Transverse colon (tissue), 4 donors: ENCODE measurements at regions of chr7 and their contacts with region 1.

Region 1: GRCh38 chr7:17640730-17641377 is 299.4 kb downstream of the SNX13 start:
- DNase-seq: no peak
- H3K4me3 ChIP-seq: no peak overlapping the region
- H3K27ac ChIP-seq: no peak overlapping the region
- H3K4me1 ChIP-seq: no peaks in the 10 kb centered on the region
- H3K27me3 ChIP-seq: no peaks in the 10 kb centered on the region
- CTCF ChIP-seq: peak; percentile 55 to 68 (median 65)
- EP300 ChIP-seq: no peak
- POLR2A ChIP-seq: no peak

Region 2: DNA sequence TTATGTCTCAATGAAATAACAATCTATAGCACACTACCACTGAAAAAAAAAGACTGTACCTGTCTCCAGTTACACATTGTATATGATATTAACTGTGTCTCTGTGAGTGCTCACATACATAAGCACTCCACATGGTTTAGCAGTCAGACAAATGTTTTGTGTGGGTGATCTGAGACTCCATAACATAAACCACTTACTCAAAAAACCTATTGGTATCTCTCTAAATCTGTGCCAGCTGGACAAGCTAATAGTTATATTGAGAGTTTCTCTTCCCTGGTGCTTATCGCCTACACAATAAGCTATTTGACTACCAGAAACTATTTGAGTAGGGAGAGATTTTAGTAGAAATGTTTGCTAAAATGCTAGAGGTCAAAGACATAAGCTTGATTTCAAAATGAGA is 569.0 kb before region 1 on chr7:
- in situ Hi-C with region 1: no loop called
- intact Hi-C with region 1: no loop called
- DNase-seq: no peak
- H3K4me3 ChIP-seq: no peak overlapping the region
- H3K27ac ChIP-seq: no peak overlapping the region
- H3K4me1 ChIP-seq: no peaks in the 10 kb centered on the region
- H3K27me3 ChIP-seq: no peaks in the 10 kb centered on the region
- CTCF ChIP-seq: no peak
- EP300 ChIP-seq: no peak
- POLR2A ChIP-seq: no peak

Region 3: GRCh38 chr7:17318146-17318545 is 322.7 kb before region 1 on chr7:
- in situ Hi-C with region 1: loop called in 2 of 4 experiments (anchors 10 to 25 kb)
- intact Hi-C with region 1: no loop called
- DNase-seq: no peak
- H3K4me3 ChIP-seq: no peak overlapping the region
- H3K27ac ChIP-seq: no peak overlapping the region
- H3K4me1 ChIP-seq: peaks cover 0 to 29% (median 16%) of the 10 kb centered on the region in 4 donors
- H3K27me3 ChIP-seq: no peaks in the 10 kb centered on the region
- CTCF ChIP-seq: no peak
- EP300 ChIP-seq: no peak
- POLR2A ChIP-seq: no peak

Region 4: GRCh38 chr7:17411922-17412321 is 228.9 kb before region 1 on chr7:
- in situ Hi-C with region 1: no loop called
- intact Hi-C with region 1: no loop called
- DNase-seq: no peak
- H3K4me3 ChIP-seq: no peak overlapping the region
- H3K27ac ChIP-seq: no peak overlapping the region
- H3K4me1 ChIP-seq: peaks cover 0 to 4% (median 2%) of the 10 kb centered on the region in 4 donors
- H3K27me3 ChIP-seq: no peaks in the 10 kb centered on the region
- CTCF ChIP-seq: no peak
- EP300 ChIP-seq: no peak
- POLR2A ChIP-seq: no peak

Region 5: DNA sequence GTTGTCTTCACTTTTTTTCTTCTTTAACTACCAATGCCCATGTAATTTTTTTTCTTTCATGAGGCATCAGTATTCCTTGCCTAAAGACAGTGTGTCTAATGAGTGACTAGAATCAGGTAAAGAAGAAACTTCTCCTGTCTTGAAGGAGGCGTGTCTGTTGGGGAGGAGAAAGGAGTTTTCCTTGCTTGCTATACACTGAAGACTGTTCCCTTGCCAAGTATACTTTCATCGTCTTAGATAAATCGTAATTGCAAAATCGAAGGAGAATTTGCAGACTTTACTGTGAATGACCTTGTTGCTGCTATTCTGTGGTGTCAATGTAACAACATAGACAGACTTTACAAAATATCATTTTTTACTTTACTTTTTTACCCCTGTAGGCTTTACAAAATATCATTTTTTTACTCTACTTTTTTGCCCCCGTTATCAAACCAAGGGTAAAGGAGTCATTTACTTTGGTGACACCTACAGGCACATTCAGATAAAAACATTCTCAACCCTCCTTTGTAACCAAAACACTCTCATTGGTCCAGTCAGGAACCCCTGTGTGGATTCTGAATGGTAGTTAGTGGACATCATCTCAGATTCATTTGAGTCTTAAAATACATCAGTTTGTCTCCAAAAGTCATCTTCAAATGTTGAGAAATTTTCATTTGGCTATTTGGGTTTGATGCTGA is 110.0 kb before region 1 on chr7:
- in situ Hi-C with region 1: no loop called
- intact Hi-C with region 1: no loop called
- DNase-seq: no peak
- H3K4me3 ChIP-seq: no peak overlapping the region
- H3K27ac ChIP-seq: no peak overlapping the region
- H3K4me1 ChIP-seq: peaks cover 0 to 14% (median 0%) of the 10 kb centered on the region in 4 donors
- H3K27me3 ChIP-seq: no peaks in the 10 kb centered on the region
- CTCF ChIP-seq: peak in 3 of 5 experiments; percentile 6 to 13 (median 8)
- EP300 ChIP-seq: no peak
- POLR2A ChIP-seq: no peak